BJ (cell line): ENCODE measurements at regions of chr9 and their contacts with region 1.

Region 1: DNA sequence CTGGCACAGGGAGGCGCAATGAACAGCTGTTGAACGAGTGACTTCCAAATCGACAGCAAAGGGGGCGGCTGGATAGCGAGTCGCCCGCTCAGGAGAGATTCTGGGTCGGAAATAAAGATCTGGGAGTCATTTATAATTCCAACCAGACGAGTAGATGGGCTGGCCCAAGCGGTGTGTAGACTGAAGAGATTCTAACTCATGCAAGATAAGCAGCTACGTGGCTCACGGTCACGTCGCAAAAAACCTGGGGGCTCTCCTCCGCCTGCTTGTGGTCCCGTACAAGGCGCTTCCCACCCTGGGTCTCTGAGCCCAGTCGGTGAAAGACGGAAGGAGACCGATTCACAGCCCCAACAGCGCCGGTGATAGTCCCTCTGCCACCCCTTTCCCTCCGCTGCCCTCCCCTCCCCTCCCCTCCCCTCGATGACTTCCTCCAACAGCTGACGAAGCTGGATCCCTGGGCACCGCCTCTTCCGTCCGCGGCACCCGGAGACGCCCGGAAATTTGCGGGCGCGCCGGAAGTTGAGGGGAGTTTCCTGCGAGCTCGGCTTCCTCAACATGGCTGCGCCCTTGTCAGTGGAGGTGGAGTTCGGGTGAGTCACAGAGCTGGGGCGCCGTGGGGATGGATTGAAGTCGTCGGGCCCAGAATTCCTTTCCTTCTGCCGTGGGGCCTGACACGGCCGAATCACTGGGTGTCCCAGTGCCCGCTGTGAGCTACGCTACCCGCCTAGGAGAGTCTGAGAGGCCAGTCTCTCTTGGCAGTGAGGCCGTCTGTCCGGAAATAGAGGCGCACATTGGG is at the start of gene URM1:
- DNase-seq: peak; percentile 88
- H3K4me3 ChIP-seq: peak within 1 kb of the TSS; percentile 81
- H3K27me3 ChIP-seq: no peaks in the 10 kb centered on the region
- CTCF ChIP-seq: peak; percentile 29; the same call in 1 of the 2 replicates
- polyA plus RNA-seq, gene URM1: 68.7 and 95.7 TPM in 2 replicates

Region 2: GRCh38 chr9:128412120-128412790 is 41.2 kb after region 1 on chr9:
- CTCF ChIA-PET with region 1: interaction called, 10 read pairs
- POLR2A ChIA-PET with region 1: no interaction called
- DNase-seq: no peak
- H3K4me3 ChIP-seq: no peak overlapping the region
- H3K27me3 ChIP-seq: peaks cover 8% of the 10 kb centered on the region
- CTCF ChIP-seq: peak; percentile 69

Region 3: DNA sequence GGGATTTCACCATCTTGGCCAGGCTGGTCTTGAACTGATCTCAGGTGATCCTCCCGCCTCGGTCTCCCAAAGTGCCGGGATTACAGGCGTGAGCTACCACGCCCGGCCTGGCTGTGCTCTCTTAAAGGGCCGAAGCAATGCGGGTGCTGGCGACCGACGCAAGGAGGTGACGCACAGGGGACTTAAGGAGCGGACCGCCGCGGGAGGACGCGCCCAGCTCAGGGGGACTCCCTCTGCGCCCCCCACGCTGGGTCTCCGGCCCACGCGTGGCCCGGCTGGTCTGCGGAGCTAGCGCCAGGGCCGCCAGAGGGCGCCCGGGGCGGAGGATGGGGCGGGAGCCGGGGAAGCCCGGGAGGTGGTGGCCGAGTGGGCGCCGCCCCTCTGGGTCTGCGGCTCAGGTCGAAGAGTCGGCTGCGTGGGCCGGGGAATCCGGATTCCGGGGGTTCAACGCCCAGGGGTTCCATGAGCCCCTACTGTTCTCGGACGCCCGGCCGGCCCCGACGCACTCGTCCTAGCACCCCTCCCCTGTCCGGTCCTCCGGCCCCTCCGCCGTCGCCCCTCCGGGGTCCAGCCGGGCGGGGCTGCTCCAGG is 49.1 kb after region 1 on chr9:
- CTCF ChIA-PET with region 1: interaction called, 12 read pairs
- POLR2A ChIA-PET with region 1: no interaction called
- DNase-seq: no peak
- H3K4me3 ChIP-seq: peak overlapping the region; percentile 60
- H3K27me3 ChIP-seq: peaks cover 6% of the 10 kb centered on the region
- CTCF ChIP-seq: peak; percentile 60

Region 4: DNA sequence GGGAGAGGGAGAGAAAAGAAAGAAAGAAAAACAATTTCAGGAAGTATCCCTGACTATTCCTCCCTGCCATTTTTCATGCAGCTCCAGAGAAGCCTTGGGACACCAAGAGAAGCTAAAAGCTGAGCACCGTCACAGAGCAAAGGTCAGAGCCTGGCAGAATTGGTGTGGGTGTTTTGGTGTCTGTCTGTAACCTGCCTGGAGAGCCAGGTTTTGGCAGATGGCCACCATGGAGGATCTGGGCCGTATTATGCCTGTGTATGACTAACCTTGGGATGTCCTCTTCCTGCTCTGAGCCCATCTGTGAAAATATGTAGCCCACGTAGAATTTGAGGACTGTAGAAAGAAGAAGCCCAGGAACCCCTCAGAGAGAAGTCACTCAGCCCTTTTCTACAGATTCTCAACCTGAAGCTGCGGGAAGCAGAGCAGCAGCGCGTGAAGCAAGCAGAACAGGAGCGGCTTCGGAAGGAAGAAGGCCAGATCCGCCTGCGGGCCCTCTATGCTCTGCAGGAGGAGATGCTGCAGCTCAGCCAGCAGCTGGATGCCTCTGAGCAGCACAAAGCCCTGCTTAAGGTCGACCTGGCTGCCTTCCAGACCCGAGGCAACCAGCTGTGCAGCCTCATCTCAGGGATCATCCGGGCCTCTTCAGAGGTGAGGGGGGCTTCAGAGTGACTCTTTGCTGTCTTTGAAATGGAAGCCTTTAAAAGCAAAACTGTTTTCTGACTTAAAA is 152.3 kb after region 1 on chr9:
- CTCF ChIA-PET with region 1: no interaction called
- POLR2A ChIA-PET with region 1: interaction called, 11 read pairs
- DNase-seq: no peak
- H3K4me3 ChIP-seq: no peak overlapping the region
- H3K27me3 ChIP-seq: no peaks in the 10 kb centered on the region
- CTCF ChIP-seq: no peak

Region 5: GRCh38 chr9:128712451-128713410 is 341.7 kb after region 1 on chr9:
- CTCF ChIA-PET with region 1: no interaction called
- POLR2A ChIA-PET with region 1: no interaction called
- DNase-seq: no peak
- H3K4me3 ChIP-seq: no peak overlapping the region
- H3K27me3 ChIP-seq: no peaks in the 10 kb centered on the region
- CTCF ChIP-seq: no peak

Region 6: GRCh38 chr9:129822898-129823541 is 1452.0 kb after region 1 on chr9:
- CTCF ChIA-PET with region 1: no interaction called
- POLR2A ChIA-PET with region 1: interaction called, 12 read pairs
- DNase-seq: no peak
- H3K4me3 ChIP-seq: peak overlapping the region; percentile 96
- H3K27me3 ChIP-seq: no peaks in the 10 kb centered on the region
- CTCF ChIP-seq: no peak